IMR-90 (cell line): ENCODE measurements at regions of chr7 and their contacts with region 1.

Region 1: GRCh38 chr7:120842121-120842621 is 15.8 kb downstream of the TSPAN12 start:
- DNase-seq: no peak
- ATAC-seq: no peak
- H3K4me3 ChIP-seq: no peak overlapping the region
- H3K27ac ChIP-seq: no peak overlapping the region
- H3K4me1 ChIP-seq: peaks cover 2% of the 10 kb centered on the region; the same call in 1 of the 2 replicates
- H3K27me3 ChIP-seq: no peaks in the 10 kb centered on the region
- CTCF ChIP-seq: no peak
- POLR2A ChIP-seq: no peak
- RAD21 ChIP-seq: no peak

Region 2: DNA sequence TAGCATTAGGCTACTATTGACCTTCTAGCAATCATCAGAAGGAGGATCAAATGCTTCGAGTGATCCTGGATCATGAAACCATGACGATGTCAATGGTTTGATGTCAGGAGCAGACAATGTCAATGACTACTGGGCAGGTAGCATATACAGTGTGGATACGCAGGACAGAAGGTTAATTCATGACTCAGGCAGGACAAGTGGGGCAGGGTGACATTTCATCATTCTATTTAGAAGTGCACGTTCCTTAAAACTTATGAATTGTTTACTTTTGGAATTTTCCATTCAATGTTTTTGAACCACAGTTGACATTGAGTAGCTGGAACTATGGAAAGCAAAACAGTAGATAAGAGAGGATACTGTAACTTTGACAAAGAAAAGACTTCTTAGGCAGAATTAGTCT is 125.0 kb before region 1 on chr7:
- CTCF ChIA-PET with region 1: no interaction called
- POLR2A ChIA-PET with region 1: interaction called, 13 read pairs
- dilution Hi-C with region 1: no loop called
- in situ Hi-C with region 1: no loop called
- intact Hi-C with region 1: no loop called
- DNase-seq: no peak
- ATAC-seq: no peak
- H3K4me3 ChIP-seq: no peak overlapping the region
- H3K27ac ChIP-seq: no peak overlapping the region
- H3K4me1 ChIP-seq: no peaks in the 10 kb centered on the region
- H3K27me3 ChIP-seq: peaks cover 5% of the 10 kb centered on the region
- CTCF ChIP-seq: no peak
- POLR2A ChIP-seq: no peak
- RAD21 ChIP-seq: no peak

Region 3: DNA sequence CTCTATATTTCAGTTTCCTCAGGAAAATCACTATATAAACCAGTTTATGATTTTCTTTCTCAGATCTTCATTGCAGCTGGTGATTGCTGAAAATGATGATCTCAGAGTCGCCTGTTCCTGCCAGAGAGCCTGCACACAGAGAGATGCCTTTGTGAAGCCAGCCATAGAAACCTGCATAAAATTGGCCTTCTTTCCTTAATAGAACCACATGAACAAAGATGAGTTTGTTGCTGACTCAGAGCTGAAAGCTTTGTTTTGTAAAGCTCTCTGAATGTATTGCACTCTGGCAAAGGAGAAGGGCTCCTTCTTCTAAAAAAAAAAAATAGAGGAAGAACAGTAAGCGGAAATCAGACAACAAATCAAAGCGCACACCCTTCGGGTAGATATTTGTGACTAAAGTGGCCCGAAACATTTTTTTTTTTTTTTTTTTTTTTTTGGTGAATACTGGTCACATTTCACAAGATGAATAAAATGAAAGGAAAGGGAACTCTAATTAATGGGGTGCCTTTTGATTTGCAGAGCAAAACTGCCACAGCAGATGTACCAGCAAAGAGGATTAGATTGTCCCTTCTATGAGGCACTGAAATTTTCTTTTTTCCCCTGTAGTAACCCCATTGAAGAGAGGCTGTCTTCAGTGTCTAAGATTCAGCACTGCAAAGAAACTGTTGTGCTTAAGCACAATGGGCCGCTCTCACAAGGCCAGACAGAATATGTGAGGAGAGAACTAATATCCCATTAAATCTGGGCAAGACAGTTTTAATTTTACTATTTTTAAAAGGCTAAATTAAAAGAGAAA is 955.7 kb after region 1 on chr7:
- CTCF ChIA-PET with region 1: no interaction called
- POLR2A ChIA-PET with region 1: no interaction called
- dilution Hi-C with region 1: no loop called
- in situ Hi-C with region 1: no loop called
- intact Hi-C with region 1: no loop called
- DNase-seq: no peak
- ATAC-seq: no peak
- H3K4me3 ChIP-seq: no peak overlapping the region
- H3K27ac ChIP-seq: no peak overlapping the region
- H3K4me1 ChIP-seq: no peaks in the 10 kb centered on the region
- H3K27me3 ChIP-seq: no peaks in the 10 kb centered on the region
- CTCF ChIP-seq: no peak
- POLR2A ChIP-seq: no peak
- RAD21 ChIP-seq: no peak